BJ (cell line): ENCODE measurements at regions of chr18 and their contacts with region 1.

Region 1: GRCh38 chr18:37445368-37445767 is 120.2 kb downstream of the CELF4 start:
- DNase-seq: no peak
- H3K4me3 ChIP-seq: no peak overlapping the region
- H3K27me3 ChIP-seq: peaks cover 3% of the 10 kb centered on the region
- CTCF ChIP-seq: no peak

Region 2: GRCh38 chr18:37434161-37434860 is 11.1 kb before region 1 on chr18:
- CTCF ChIA-PET with region 1: interaction called, 15 read pairs
- POLR2A ChIA-PET with region 1: no interaction called
- DNase-seq: no peak
- H3K4me3 ChIP-seq: no peak overlapping the region
- H3K27me3 ChIP-seq: peaks cover 3% of the 10 kb centered on the region; the same call in 1 of the 2 replicates
- CTCF ChIP-seq: no peak

Region 3: DNA sequence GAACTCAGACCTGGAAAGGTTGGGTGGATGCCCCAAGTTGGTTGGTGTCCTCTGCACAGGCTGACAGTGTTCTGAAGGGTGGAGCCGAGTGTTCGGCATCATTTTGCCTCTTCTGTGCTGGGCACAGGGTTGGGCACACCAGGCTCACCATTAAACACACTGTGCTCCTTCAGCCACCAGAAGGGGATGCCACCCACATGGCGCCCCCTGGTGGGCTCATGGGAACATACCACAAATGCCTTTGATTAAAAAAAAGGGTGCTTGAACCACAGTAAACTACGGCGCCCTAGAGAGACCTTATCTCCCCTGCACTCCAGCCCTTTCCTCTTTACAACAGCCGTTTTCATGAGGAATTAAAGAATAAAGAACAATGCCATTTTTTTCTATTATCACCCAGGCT is 30.8 kb after region 1 on chr18:
- CTCF ChIA-PET with region 1: interaction called, 21 read pairs
- POLR2A ChIA-PET with region 1: no interaction called
- DNase-seq: no peak
- H3K4me3 ChIP-seq: no peak overlapping the region
- H3K27me3 ChIP-seq: peaks cover 5% of the 10 kb centered on the region
- CTCF ChIP-seq: peak; percentile 73

Region 4: GRCh38 chr18:37537868-37538525 is 92.6 kb after region 1 on chr18:
- CTCF ChIA-PET with region 1: interaction called, 20 read pairs
- POLR2A ChIA-PET with region 1: no interaction called
- DNase-seq: no peak
- H3K4me3 ChIP-seq: no peak overlapping the region
- H3K27me3 ChIP-seq: peaks cover 11% of the 10 kb centered on the region
- CTCF ChIP-seq: peak; percentile 95